ENCODE measurements at regions of chr19 and their contacts with region 1.

Region 1: GRCh38 chr19:11995174-11995573 is 30.3 kb downstream of the ZNF763 start:
- DNase-seq: no peak
- ATAC-seq: peak in 1 of 2 donors; percentile 48
- H3K4me3 ChIP-seq: no peak overlapping the region
- H3K27ac ChIP-seq: no peak overlapping the region
- H3K4me1 ChIP-seq: no peaks in the 10 kb centered on the region
- H3K27me3 ChIP-seq: no peaks in the 10 kb centered on the region

Region 2: DNA sequence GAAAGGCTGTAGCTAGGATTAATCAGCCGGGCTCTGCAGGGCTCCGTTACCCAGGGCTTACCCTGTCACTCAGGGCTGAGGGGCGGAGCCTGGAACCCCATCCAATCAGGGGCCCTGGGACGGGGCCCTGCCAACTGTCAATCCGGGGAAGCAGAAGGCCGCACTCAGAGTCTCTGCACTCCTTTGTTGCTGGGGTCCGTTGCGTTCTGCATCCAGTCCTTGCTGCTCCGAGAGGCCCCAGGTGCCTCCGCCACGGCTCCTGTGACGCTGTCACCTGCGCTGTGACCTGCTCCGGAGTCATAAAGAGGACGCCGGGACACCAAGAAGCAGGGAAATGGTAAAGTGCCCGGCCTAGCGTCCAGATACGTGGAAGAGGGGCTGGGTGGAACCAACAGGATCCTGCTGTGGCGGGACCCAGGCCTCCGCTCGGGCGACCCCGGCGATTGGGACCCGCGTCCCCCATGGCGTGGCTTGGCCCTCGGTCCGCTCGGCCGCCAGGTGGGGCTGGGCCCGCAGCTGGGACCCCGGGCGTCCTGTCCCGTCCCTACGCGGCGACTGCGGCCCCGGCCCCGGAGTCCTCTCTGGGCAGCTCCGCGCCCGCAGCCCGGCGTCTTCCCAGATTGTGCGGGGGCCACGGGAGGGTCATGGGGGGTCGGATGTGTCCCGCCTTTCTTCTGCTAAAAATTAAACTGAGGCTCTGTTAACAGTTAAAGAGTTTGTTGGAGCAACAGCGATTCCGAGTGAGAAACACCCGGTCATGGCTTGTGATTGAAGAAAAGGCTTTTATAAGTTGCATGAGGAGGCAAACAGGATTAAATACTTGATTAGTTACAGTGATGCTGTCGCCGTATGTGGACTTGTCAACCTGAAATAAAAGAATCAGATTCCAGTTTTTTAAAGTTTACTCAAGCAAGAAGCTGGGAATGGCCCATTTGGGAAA is 196.5 kb before region 1 on chr19 and contains the start of gene ZNF491:
- intact Hi-C with region 1: loop called in 1 of 4 experiments (anchors 10 kb)
- DNase-seq: peak; percentile 94 to 98 (median 97)
- ATAC-seq: peak; percentile 100
- H3K4me3 ChIP-seq: peak within 1 kb of the TSS; percentile 65
- H3K27ac ChIP-seq: peak within 1 kb of the TSS; percentile 86
- H3K4me1 ChIP-seq: peaks cover 4% of the 10 kb centered on the region
- H3K27me3 ChIP-seq: no peaks in the 10 kb centered on the region
- total RNA-seq, gene ZNF491: 3.1 to 3.8 (median 3.4) TPM

Region 3: DNA sequence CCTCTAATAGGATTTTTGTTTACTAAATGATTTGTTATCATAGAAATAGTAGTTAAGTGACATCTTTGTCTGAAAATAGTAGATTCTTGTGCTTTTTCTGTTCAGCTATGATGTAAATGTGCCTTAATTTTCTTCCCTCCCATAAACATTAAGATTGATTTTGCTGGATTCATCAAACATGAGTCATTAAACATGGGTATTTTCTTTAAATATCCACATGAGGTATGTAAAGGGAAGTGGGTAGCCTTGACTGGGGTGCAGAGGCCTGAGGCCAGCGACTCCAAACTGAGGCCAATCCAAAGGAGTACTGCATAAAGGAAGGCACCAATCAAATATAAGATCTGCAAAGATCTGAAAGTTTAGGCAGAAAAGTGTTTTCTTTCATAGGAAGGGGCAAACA is 171.5 kb after region 1 on chr19:
- intact Hi-C with region 1: no loop called
- DNase-seq: no peak
- ATAC-seq: no peak
- H3K4me3 ChIP-seq: no peak overlapping the region
- H3K27ac ChIP-seq: no peak overlapping the region
- H3K4me1 ChIP-seq: no peaks in the 10 kb centered on the region
- H3K27me3 ChIP-seq: no peaks in the 10 kb centered on the region

Measured in right cardiac atrium (tissue), 5 donors.